Endothelial cell of umbilical vein (primary cell): ENCODE measurements at regions of chr3 and their contacts with region 1.

Region 1: DNA sequence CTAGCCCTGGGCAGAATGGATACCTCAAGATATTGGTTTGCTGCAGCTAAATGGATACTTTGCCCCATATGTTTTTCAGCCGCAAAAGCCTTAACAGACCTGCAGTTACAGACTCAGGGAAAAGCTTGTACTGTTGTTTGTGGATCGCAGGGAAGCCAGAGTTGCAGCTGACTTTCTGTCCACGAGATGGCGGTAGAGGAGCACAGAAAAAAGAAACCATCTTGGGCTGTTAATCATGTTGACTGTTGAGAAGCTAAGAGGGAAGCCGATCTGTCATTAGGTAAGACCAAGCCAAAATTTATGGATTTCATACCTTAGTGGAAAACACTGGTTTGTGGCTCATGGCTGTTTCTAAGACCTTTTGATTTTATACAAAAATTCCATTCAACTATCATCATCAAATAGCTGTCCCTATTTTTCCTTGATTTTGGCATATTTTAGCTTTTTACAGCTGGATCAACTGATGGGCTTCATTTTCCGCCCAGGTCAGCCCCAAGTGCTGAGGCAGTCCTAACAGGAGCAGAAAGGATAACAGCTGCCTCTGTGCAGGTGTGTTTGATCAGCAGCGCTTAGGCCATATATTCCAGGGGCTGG is 205.7 kb upstream of the ZPLD1 start:
- DNase-seq: peak; percentile 83
- H3K4me3 ChIP-seq: no peak overlapping the region
- H3K27ac ChIP-seq: no peak overlapping the region
- H3K4me1 ChIP-seq: no peaks in the 10 kb centered on the region
- H3K27me3 ChIP-seq: peaks cover 10 to 13% of the 10 kb centered on the region in 2 experiments
- CTCF ChIP-seq: peak; percentile 83 to 89
- POLR2A ChIP-seq: no peak

Region 2: DNA sequence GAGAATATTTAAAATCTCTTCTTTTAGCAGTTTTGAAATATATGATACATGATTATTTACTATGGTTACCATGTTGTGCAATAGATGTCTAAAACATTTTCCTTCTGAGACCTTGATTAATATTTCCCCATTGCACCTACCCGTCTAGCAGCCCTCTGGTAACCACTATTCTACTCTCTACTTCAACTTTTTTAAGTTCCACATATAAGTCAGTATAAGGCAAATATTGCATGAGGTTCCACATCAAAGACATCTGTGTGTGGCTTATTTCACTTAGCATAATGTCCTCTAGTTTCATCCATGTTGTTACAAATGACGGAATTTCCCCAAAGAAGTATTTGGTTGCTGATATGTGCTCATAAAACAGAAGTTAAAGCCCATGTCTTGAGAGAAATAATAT is 409.4 kb before region 1 on chr3:
- CTCF ChIA-PET with region 1: interaction called, 358 read pairs
- POLR2A ChIA-PET with region 1: interaction called, 4 read pairs
- dilution Hi-C with region 1: no loop called
- intact Hi-C with region 1: no loop called
- DNase-seq: no peak
- H3K4me3 ChIP-seq: no peak overlapping the region
- H3K27ac ChIP-seq: no peak overlapping the region
- H3K4me1 ChIP-seq: no peaks in the 10 kb centered on the region
- H3K27me3 ChIP-seq: no peaks in the 10 kb centered on the region
- CTCF ChIP-seq: no peak
- POLR2A ChIP-seq: no peak

Region 3: GRCh38 chr3:101902041-101902440 is 327.1 kb before region 1 on chr3:
- CTCF ChIA-PET with region 1: interaction called, 13 read pairs
- POLR2A ChIA-PET with region 1: no interaction called
- dilution Hi-C with region 1: no loop called
- intact Hi-C with region 1: no loop called
- DNase-seq: peak; percentile 70
- H3K4me3 ChIP-seq: no peak overlapping the region
- H3K27ac ChIP-seq: no peak overlapping the region
- H3K4me1 ChIP-seq: peaks cover 4% of the 10 kb centered on the region
- H3K27me3 ChIP-seq: no peaks in the 10 kb centered on the region
- CTCF ChIP-seq: no peak
- POLR2A ChIP-seq: no peak

Region 4: GRCh38 chr3:102006812-102007485 is 222.2 kb before region 1 on chr3:
- CTCF ChIA-PET with region 1: interaction called, 16 read pairs
- POLR2A ChIA-PET with region 1: no interaction called
- dilution Hi-C with region 1: no loop called
- intact Hi-C with region 1: loop called (anchors 5 kb)
- DNase-seq: peak; percentile 87
- H3K4me3 ChIP-seq: peak overlapping the region in 1 of 3 experiments; percentile 11
- H3K27ac ChIP-seq: peak overlapping the region; percentile 69
- H3K4me1 ChIP-seq: peaks cover 18% of the 10 kb centered on the region
- H3K27me3 ChIP-seq: no peaks in the 10 kb centered on the region
- CTCF ChIP-seq: no peak
- POLR2A ChIP-seq: no peak

Region 5: GRCh38 chr3:102163036-102163827 is 65.9 kb before region 1 on chr3:
- CTCF ChIA-PET with region 1: interaction called, 14 read pairs
- POLR2A ChIA-PET with region 1: no interaction called
- dilution Hi-C with region 1: no loop called
- intact Hi-C with region 1: loop called (anchors 1 kb)
- DNase-seq: peak; percentile 98
- H3K4me3 ChIP-seq: no peak overlapping the region
- H3K27ac ChIP-seq: peak overlapping the region; percentile 94
- H3K4me1 ChIP-seq: peaks cover 28% of the 10 kb centered on the region
- H3K27me3 ChIP-seq: no peaks in the 10 kb centered on the region
- CTCF ChIP-seq: no peak
- POLR2A ChIP-seq: no peak

Region 6: GRCh38 chr3:102307429-102307828 is 78.3 kb after region 1 on chr3:
- CTCF ChIA-PET with region 1: no interaction called
- POLR2A ChIA-PET with region 1: no interaction called
- dilution Hi-C with region 1: no loop called
- intact Hi-C with region 1: no loop called
- DNase-seq: no peak
- H3K4me3 ChIP-seq: no peak overlapping the region
- H3K27ac ChIP-seq: no peak overlapping the region
- H3K4me1 ChIP-seq: no peaks in the 10 kb centered on the region
- H3K27me3 ChIP-seq: peaks cover 7% of the 10 kb centered on the region in 2 experiments
- CTCF ChIP-seq: no peak
- POLR2A ChIP-seq: no peak

Region 7: DNA sequence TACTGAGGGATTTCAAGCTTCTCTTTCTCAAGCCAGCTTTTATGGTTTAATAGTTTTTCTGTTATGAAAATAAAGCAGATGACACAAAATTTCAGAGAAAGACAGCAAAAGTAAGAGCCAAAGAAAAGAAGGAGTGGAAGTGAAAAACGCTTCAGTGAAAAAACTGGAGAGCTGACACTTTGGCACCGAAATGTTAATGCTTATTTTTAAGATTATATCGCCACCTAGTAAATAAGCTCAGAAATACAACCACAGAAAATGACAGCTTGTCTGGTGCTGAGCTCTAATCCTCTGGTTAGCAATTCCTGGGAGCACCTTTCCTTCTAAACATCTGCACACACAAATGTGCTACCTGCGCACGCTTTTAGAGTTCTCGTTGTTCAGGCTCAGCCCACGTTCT is 307.3 kb after region 1 on chr3:
- CTCF ChIA-PET with region 1: interaction called, 304 read pairs
- POLR2A ChIA-PET with region 1: interaction called, 4 read pairs
- dilution Hi-C with region 1: no loop called
- intact Hi-C with region 1: loop called (anchors 1 kb)
- DNase-seq: peak; percentile 30
- H3K4me3 ChIP-seq: no peak overlapping the region
- H3K27ac ChIP-seq: no peak overlapping the region
- H3K4me1 ChIP-seq: no peaks in the 10 kb centered on the region
- H3K27me3 ChIP-seq: peaks cover 1 to 13% of the 10 kb centered on the region in 2 experiments
- CTCF ChIP-seq: peak in 1 of 2 donors; percentile 9
- POLR2A ChIP-seq: no peak